ENCODE measurements at regions of chr5 and their contacts with region 1.

Region 1: GRCh38 chr5:55691265-55692105 is 20.6 kb downstream of the SLC38A9 start:
- DNase-seq: no peak
- ATAC-seq: peak; percentile 34 to 73 (median 56)
- H3K4me3 ChIP-seq: peak overlapping the region in 3 of 12 donors; percentile 3 to 36 (median 17)
- H3K27ac ChIP-seq: peak overlapping the region in 8 of 12 donors; percentile 8 to 64 (median 34)
- H3K4me1 ChIP-seq: peaks cover 5 to 33% (median 19%) of the 10 kb centered on the region in 12 donors
- H3K27me3 ChIP-seq: no peaks in the 10 kb centered on the region
- CTCF ChIP-seq: peak; percentile 55 to 80 (median 74)
- POLR2A ChIP-seq: no peak

Region 2: DNA sequence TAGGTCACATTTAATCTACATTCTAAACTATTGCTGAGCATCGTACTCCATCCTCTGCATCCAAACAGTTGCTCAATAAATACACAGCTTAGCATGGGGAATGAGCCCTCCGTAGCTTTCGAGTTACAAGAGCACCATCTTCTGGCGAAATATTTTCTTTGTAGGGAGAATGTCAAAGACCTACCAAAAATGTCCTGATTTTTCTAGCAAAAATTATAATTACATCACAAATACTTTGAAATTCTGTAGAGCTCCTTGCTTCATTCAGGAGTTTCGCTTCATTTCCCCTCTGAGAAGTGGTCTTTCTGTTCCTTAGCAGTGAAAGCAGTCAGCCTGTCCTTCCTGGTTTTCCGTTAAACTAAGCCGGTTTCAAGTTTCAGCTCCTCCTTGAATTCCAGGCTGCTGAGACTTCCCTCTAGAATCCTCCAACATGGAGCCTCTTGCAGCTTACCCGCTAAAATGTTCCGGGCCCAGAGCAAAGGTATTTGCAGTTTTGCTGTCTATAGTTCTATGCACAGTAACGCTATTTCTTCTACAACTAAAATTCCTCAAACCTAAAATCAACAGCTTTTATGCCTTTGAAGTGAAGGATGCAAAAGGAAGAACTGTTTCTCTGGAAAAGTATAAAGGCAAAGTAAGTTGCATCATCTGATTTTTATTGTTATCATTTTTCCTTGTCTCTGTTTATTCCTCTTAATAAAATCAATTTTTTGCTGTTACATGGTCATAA is 531.6 kb before region 1 on chr5 and contains the start of gene GPX8:
- intact Hi-C with region 1: loop called in 1 of 10 experiments (anchors 10 kb)
- DNase-seq: peak in 2 of 5 donors; percentile 22 to 27
- ATAC-seq: peak; percentile 55 to 90 (median 86)
- H3K4me3 ChIP-seq: peak within 1 kb of the TSS; percentile 2 to 63 (median 48)
- H3K27ac ChIP-seq: peak within 1 kb of the TSS in 11 of 12 donors; percentile 14 to 72 (median 55)
- H3K4me1 ChIP-seq: peaks cover 0 to 6% (median 4%) of the 10 kb centered on the region in 12 donors
- H3K27me3 ChIP-seq: peaks cover 0 to 9% (median 0%) of the 10 kb centered on the region in 9 donors
- CTCF ChIP-seq: peak; percentile 31 to 72 (median 56)
- POLR2A ChIP-seq: no peak
- total RNA-seq, gene GPX8: 3.9 to 16.1 (median 5.1) TPM

Region 3: GRCh38 chr5:55324815-55325418 is 366.6 kb before region 1 on chr5:
- intact Hi-C with region 1: loop called in 1 of 10 experiments (anchors 5 kb)
- DNase-seq: no peak
- ATAC-seq: peak in 1 of 4 donors; percentile 24
- H3K4me3 ChIP-seq: no peak overlapping the region
- H3K27ac ChIP-seq: no peak overlapping the region
- H3K4me1 ChIP-seq: peaks cover 0 to 9% (median 7%) of the 10 kb centered on the region in 12 donors
- H3K27me3 ChIP-seq: no peaks in the 10 kb centered on the region
- CTCF ChIP-seq: peak; percentile 38 to 66 (median 52)
- POLR2A ChIP-seq: no peak

Region 4: DNA sequence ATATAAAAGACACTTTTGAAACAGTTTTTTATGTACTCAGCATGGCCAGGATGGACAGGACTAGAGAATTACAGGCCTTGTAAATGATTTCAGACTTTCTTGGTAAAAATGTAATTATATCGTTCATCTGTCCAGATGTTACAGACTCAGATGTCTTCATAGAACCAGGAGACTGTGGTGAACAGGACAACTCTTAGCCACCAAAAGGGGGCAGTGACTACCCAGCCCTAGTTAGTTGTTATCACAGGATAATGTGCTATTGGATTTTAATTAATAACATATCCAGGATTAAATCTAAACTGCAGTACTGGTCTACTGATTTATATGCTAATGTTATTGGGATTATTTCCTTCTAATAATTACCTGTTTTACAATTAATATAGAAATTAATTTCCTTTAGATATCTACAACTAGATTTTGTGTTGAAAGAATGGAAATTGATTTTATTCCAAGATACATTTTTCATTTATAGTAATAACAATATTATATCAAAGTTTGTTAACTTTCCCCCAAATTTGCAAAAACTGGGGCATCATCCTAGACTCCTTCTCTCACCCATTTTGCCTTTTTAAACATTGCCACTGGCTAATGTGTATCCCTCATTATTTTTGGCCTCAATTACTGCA is 284.3 kb before region 1 on chr5:
- intact Hi-C with region 1: loop called (anchors 1 to 5 kb)
- DNase-seq: no peak
- ATAC-seq: peak; percentile 66 to 87 (median 77)
- H3K4me3 ChIP-seq: no peak overlapping the region
- H3K27ac ChIP-seq: no peak overlapping the region
- H3K4me1 ChIP-seq: peaks cover 0 to 13% (median 0%) of the 10 kb centered on the region in 12 donors
- H3K27me3 ChIP-seq: no peaks in the 10 kb centered on the region
- CTCF ChIP-seq: peak; percentile 61 to 90 (median 76)
- POLR2A ChIP-seq: no peak

Region 5: GRCh38 chr5:55601204-55601618 is 90.3 kb before region 1 on chr5:
- intact Hi-C with region 1: loop called in 5 of 10 experiments (anchors 2 to 10 kb)
- DNase-seq: peak; percentile 83 to 90 (median 87)
- ATAC-seq: peak; percentile 83 to 89 (median 87)
- H3K4me3 ChIP-seq: peak overlapping the region in 9 of 12 donors; percentile 24 to 47 (median 39)
- H3K27ac ChIP-seq: peak overlapping the region; percentile 82 to 99 (median 94)
- H3K4me1 ChIP-seq: peaks cover 22 to 85% (median 80%) of the 10 kb centered on the region in 12 donors
- H3K27me3 ChIP-seq: no peaks in the 10 kb centered on the region
- CTCF ChIP-seq: no peak
- POLR2A ChIP-seq: peak in 1 of 2 donors; percentile 45

Measured in heart left ventricle (tissue), 16 donors.